WTC11 (cell line): ENCODE measurements at regions of chr9 and their contacts with region 1.

Region 1: DNA sequence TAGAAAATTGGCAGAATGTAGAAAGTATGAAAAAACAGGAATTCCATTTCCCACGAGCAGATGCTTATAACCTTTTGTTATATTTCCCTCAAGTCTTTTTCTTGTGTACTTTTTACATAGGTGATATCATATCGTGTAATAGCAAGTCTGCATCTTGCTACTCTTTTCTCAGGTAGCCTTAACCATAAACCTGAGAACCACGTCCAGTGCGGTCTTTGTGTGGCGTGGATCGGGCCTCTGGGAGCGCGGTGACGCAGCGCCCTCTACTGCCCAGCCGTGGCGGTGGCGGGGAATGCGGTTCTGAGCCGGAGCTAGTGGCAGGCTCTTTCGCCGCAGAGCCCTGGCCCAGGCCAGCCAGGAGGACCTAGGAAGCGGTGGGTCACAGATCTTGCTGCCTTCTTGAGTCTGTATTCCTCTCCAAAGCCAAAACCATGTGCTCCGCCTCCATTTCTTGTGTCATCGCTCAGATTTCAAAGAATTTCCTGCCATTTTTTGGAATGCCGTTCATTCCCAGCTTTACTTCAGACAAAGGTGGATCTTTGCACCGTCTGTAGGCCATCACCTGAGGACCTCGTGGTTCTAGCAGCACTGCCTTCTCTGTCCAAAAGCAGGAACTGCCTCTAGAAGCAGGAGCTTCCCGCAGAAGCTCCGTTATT is 71.9 kb downstream of the MVB12B start:
- DNase-seq: peak; percentile 86
- ATAC-seq: peak; percentile 90
- H3K4me3 Mint-ChIP-seq: no peak overlapping the region
- H3K27ac Mint-ChIP-seq: no peak overlapping the region
- H3K4me1 Mint-ChIP-seq: peaks cover 23% of the 10 kb centered on the region
- H3K27me3 Mint-ChIP-seq: no peaks in the 10 kb centered on the region
- CTCF ChIP-seq: peak; percentile 92

Region 2: DNA sequence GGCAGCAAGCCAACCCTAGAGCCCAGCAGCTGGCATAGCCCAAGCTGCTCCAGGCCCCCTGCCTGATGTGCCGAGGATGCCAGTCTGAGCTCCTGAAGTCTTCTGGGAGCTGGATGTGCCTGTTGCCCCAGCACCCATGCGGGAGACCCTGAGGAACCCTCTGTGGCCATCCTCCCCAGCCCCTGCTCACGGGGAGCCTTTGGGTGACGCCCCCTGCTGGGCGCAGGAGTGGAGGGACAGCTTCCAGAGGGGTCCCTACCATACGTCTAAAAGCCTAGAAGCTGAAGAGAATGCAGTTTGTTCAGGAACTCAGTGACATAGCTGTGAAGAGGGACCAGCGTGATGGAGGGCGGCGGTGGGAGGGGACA is 105.0 kb before region 1 on chr9:
- CTCF ChIA-PET with region 1: interaction called, 15 read pairs
- POLR2A ChIA-PET with region 1: no interaction called
- DNase-seq: peak; percentile 47
- ATAC-seq: no peak
- H3K4me3 Mint-ChIP-seq: no peak overlapping the region
- H3K27ac Mint-ChIP-seq: no peak overlapping the region
- H3K4me1 Mint-ChIP-seq: 0 out of 2 replicates have a peak, but pooled peaks cover under 1% of the 10 kb centered on the region
- H3K27me3 Mint-ChIP-seq: no peaks in the 10 kb centered on the region
- CTCF ChIP-seq: no peak

Region 3: GRCh38 chr9:126317513-126317912 is 81.0 kb before region 1 on chr9:
- CTCF ChIA-PET with region 1: interaction called, 13 read pairs
- POLR2A ChIA-PET with region 1: no interaction called
- DNase-seq: no peak
- ATAC-seq: no peak
- H3K4me3 Mint-ChIP-seq: no peak overlapping the region
- H3K27ac Mint-ChIP-seq: no peak overlapping the region
- H3K4me1 Mint-ChIP-seq: no peaks in the 10 kb centered on the region; the same call in 1 of the 2 replicates
- H3K27me3 Mint-ChIP-seq: peaks cover 3% of the 10 kb centered on the region; the same call in 1 of the 2 replicates
- CTCF ChIP-seq: no peak

Region 4: GRCh38 chr9:126375386-126375785 is 23.1 kb before region 1 on chr9:
- CTCF ChIA-PET with region 1: interaction called, 20 read pairs
- POLR2A ChIA-PET with region 1: no interaction called
- DNase-seq: no peak
- ATAC-seq: 0 out of 2 replicates have a peak, but pooled peaks have one; percentile 20
- H3K4me3 Mint-ChIP-seq: no peak overlapping the region
- H3K27ac Mint-ChIP-seq: peak overlapping the region; percentile 60; the same call in 1 of the 2 replicates
- H3K4me1 Mint-ChIP-seq: peaks cover 66% of the 10 kb centered on the region
- H3K27me3 Mint-ChIP-seq: no peaks in the 10 kb centered on the region
- CTCF ChIP-seq: no peak

Region 5: DNA sequence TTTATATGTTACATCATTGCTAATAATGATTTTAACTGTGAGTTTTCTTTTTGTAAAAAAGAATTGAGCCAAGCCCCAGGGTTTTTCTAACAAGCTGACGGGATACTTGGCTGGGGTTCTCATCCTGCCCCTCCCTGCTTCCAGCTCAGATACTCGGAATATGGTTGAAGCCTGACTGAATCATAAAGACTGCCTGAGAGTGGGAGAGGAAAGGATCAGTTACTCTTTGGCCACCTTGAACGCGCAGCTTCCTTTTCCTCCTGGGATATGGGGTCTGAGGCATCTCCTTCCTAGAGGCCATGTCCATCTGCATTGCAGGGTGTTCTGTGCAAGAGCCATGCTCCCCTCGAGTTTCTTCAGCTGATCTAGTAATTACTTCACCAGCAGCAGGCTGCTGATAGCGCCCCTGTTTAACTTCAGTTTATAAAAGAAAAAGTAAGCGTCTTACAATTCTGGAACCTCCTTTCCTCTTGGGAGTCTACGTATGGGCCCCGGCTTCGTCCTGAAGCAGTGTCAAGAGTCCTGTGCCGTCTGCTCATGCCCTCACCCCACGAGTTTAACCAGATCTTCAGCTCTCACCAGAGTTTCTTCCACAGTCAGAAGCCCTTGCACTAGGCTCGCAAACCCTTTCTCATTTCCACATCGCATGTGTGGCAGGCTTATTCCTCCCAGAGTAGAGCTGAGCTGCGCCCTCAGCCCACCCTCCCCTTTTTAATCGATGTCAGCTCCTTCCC is 58.1 kb after region 1 on chr9:
- CTCF ChIA-PET with region 1: interaction called, 16 read pairs
- POLR2A ChIA-PET with region 1: no interaction called
- DNase-seq: no peak
- ATAC-seq: no peak
- H3K4me3 Mint-ChIP-seq: no peak overlapping the region
- H3K27ac Mint-ChIP-seq: 0 out of 2 replicates have a peak overlapping the region, but pooled peaks have one; percentile 47
- H3K4me1 Mint-ChIP-seq: peaks cover 19% of the 10 kb centered on the region
- H3K27me3 Mint-ChIP-seq: no peaks in the 10 kb centered on the region
- CTCF ChIP-seq: no peak

Region 6: GRCh38 chr9:126490871-126491567 is 92.5 kb after region 1 on chr9:
- CTCF ChIA-PET with region 1: interaction called, 23 read pairs
- POLR2A ChIA-PET with region 1: no interaction called
- DNase-seq: no peak
- ATAC-seq: peak; percentile 43; the same call in 1 of the 2 replicates
- H3K4me3 Mint-ChIP-seq: no peak overlapping the region
- H3K27ac Mint-ChIP-seq: no peak overlapping the region
- H3K4me1 Mint-ChIP-seq: peaks cover 12% of the 10 kb centered on the region
- H3K27me3 Mint-ChIP-seq: no peaks in the 10 kb centered on the region; the same call in 1 of the 2 replicates
- CTCF ChIP-seq: peak; percentile 91

Region 7: DNA sequence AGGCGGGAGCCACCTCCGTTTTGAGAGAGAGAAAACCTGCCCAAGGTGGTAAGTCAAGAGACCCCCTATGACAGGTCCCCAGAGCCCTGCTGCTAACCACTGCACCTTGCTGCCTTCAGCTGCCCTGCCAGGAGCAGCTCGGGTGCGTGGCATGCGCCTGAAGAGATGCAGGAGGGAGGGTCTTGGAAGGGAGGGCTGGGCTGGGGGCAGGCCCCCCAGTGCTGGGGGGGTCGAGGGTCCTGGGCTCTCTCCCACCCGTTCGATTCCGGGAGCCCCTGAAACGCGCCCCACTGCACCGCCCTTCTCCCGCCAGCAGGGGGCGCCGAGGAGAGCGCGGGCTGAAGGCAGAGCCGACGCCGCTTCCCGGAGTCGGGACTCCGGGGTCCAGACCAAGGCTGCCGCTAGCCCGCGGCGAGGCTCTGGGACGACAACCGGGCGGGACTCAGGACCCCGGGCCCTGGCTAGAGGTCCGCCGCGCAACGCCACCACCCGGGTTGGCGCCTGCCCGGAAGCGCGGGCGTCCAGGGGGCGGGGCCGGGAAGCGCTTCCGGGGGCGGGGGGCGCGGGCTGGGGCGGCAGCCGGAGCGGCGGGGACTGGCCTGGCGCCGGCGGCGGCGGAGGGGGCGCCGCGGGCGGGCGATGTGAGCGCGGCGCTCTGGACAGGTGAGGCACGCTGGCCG is 461.7 kb after region 1 on chr9 and contains the start of gene ZBTB34:
- CTCF ChIA-PET with region 1: no interaction called
- POLR2A ChIA-PET with region 1: no interaction called
- DNase-seq: peak; percentile 83
- ATAC-seq: peak; percentile 72
- H3K4me3 Mint-ChIP-seq: peak within 1 kb of the TSS; percentile 81
- H3K27ac Mint-ChIP-seq: peak within 1 kb of the TSS; percentile 54
- H3K4me1 Mint-ChIP-seq: peaks cover 33% of the 10 kb centered on the region
- H3K27me3 Mint-ChIP-seq: peaks cover 19% of the 10 kb centered on the region
- CTCF ChIP-seq: peak; percentile 100
- total RNA-seq, gene ZBTB34: 15.9 to 18.4 TPM (median 16.9 TPM) in 3 replicates

Region 8: DNA sequence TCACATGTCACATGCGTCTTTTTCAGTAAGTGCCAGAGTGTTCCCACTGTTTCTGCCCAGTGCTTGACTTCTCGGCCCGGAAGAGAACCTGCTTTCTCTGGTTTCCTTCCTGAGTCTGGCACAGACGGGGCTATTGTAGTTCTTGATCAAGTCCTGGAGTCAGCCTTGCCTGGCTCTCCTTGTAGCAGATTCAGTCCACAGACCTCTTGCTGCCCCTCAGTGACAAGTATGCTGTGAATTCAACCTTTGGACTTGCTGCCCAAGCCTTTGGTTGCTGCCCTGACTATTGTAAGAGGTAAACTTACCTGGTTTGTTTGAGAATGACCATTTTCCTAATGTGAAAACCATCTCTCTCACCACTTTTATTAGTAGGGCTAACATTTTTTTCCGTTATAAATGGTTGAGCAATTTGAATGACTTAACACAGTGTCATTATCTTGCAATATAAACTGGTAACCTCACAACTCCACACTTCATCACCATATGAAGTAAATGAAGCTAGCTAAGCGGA is 486.7 kb after region 1 on chr9:
- CTCF ChIA-PET with region 1: no interaction called
- POLR2A ChIA-PET with region 1: no interaction called
- DNase-seq: no peak
- ATAC-seq: no peak
- H3K4me3 Mint-ChIP-seq: no peak overlapping the region
- H3K27ac Mint-ChIP-seq: no peak overlapping the region; the same call in 1 of the 2 replicates
- H3K4me1 Mint-ChIP-seq: peaks cover 29% of the 10 kb centered on the region
- H3K27me3 Mint-ChIP-seq: no peaks in the 10 kb centered on the region
- CTCF ChIP-seq: no peak

Region 9: GRCh38 chr9:127166651-127167524 is 768.4 kb after region 1 on chr9:
- CTCF ChIA-PET with region 1: no interaction called
- POLR2A ChIA-PET with region 1: no interaction called
- DNase-seq: no peak
- ATAC-seq: no peak; the same call in 1 of the 2 replicates
- H3K4me3 Mint-ChIP-seq: no peak overlapping the region
- H3K27ac Mint-ChIP-seq: peak overlapping the region; percentile 19; the same call in 1 of the 2 replicates
- H3K4me1 Mint-ChIP-seq: peaks cover 36% of the 10 kb centered on the region
- H3K27me3 Mint-ChIP-seq: no peaks in the 10 kb centered on the region
- CTCF ChIP-seq: no peak